ENCODE measurements at regions of chr17 and their contacts with region 1.

Region 1: DNA sequence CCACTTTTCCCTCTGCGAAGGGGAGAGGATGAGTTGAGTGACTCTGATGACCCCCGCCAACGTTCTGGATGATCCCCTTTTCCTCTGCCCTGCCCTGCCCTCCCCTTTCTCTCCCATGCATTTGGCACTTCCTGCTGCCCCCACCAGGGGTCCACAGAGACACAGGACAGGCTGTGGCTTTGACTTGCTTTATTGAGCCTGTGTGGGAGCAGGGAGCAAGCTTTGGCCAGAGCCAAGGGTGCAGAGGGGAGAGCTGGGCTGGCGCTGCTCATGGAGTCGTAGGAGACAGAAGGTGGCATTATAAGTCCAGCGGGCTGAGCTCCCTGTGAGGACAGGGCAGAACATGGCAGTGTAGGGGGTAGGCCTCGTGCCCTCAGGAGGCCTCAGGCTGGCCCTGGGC is 1.6 kb downstream of the PPY start:
- DNase-seq: peak; percentile 37
- H3K4me3 ChIP-seq: no peak overlapping the region
- H3K27ac ChIP-seq: no peak overlapping the region
- H3K4me1 ChIP-seq: no peaks in the 10 kb centered on the region
- H3K27me3 ChIP-seq: no peaks in the 10 kb centered on the region
- CTCF ChIP-seq: peak; percentile 46

Region 2: GRCh38 chr17:44170499-44171201 is 230.0 kb after region 1 on chr17 and contains the start of gene ASB16:
- CTCF ChIA-PET with region 1: interaction called, 9 read pairs
- POLR2A ChIA-PET with region 1: no interaction called
- intact Hi-C with region 1: loop called (anchors 5 kb)
- DNase-seq: no peak
- H3K4me3 ChIP-seq: no peak within 1 kb of the TSS
- H3K27ac ChIP-seq: no peak within 1 kb of the TSS
- H3K4me1 ChIP-seq: no peaks in the 10 kb centered on the region
- H3K27me3 ChIP-seq: no peaks in the 10 kb centered on the region
- CTCF ChIP-seq: no peak
- total RNA-seq, gene ASB16: 0.17 TPM in 1 of 2 replicates, not detected in the other

Region 3: GRCh38 chr17:44308320-44308818 is 367.7 kb after region 1 on chr17 and contains the start of gene RUNDC3A:
- CTCF ChIA-PET with region 1: no interaction called
- POLR2A ChIA-PET with region 1: no interaction called
- intact Hi-C with region 1: no loop called
- DNase-seq: peak; percentile 80
- H3K4me3 ChIP-seq: peak within 1 kb of the TSS; percentile 21
- H3K27ac ChIP-seq: no peak within 1 kb of the TSS
- H3K4me1 ChIP-seq: no peaks in the 10 kb centered on the region
- H3K27me3 ChIP-seq: peaks cover 4% of the 10 kb centered on the region
- CTCF ChIP-seq: no peak
- total RNA-seq, gene RUNDC3A: 0.56 and 1.2 TPM in 2 replicates